T-cell (primary cell): ENCODE measurements at regions of chr4 and their contacts with region 1.

Region 1: DNA sequence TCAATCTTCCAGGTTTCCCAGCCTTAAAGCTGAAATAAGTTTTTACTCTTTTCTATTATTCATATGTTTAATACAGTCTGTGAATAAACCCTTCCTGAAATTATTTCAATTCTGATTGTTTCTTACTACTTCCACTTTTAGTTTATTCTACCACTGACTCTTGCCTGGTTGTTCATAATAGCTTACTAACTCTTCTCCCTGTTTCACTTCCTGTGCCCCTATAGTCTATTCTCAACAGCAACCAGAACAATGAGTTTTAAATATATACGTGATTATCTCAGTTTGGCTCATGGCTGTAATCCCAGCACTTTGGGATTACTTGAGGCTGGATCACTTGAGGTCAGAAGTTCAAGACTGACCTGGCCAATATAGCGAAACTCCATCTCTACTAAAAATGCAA is 408.0 kb upstream of the SPOCK3 start:
- DNase-seq: no peak
- ATAC-seq: no peak
- H3K4me3 ChIP-seq: no peak overlapping the region
- H3K4me3 Mint-ChIP-seq: no peak overlapping the region
- H3K27ac ChIP-seq: no peak overlapping the region
- H3K27ac Mint-ChIP-seq: no peak overlapping the region
- H3K4me1 ChIP-seq: no peaks in the 10 kb centered on the region
- H3K4me1 Mint-ChIP-seq: no peaks in the 10 kb centered on the region
- H3K27me3 ChIP-seq: no peaks in the 10 kb centered on the region
- H3K27me3 Mint-ChIP-seq: no peaks in the 10 kb centered on the region

Region 2: DNA sequence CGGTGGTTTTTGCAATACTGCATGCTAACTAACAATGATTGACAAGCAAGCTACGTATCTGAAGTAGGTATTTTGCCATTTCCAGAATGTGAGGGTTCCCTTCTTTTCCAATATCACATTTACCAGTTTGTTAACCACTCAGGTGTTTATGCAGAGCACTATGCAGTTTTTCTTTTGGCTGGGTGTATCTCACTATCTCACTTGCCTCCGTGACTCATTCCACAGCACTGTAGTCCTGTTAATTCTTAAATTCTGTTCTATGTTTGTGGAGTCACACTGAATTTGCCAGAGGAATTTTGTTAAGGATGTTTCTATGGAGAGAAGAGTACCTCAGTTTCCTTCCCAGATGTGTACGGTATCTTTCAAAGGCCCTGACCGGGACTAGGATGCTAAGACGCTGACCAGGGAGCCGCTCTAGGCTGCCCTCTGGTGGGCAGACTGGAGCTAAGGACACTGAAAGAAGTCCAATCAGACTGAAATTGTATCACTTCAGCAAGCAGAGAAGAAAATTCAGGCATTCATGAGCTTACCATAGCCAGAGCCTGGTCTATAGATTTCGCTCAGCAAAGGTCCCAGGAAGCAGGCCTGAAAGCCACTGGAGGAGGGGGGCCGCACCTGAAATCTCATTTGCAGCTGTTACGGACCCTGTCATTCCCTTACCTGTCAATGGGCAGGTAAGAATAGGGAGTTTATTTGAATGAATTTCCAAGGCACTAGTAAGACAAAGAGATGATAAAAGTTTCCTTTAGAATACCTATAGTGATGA is 19.6 kb before region 1 on chr4:
- CTCF ChIA-PET with region 1: no interaction called
- POLR2A ChIA-PET with region 1: no interaction called
- DNase-seq: peak in 1 of 35 experiments; percentile 4
- ATAC-seq: no peak
- H3K4me3 ChIP-seq: no peak overlapping the region
- H3K4me3 Mint-ChIP-seq: no peak overlapping the region
- H3K27ac ChIP-seq: no peak overlapping the region
- H3K27ac Mint-ChIP-seq: no peak overlapping the region
- H3K4me1 ChIP-seq: no peaks in the 10 kb centered on the region
- H3K4me1 Mint-ChIP-seq: no peaks in the 10 kb centered on the region
- H3K27me3 ChIP-seq: no peaks in the 10 kb centered on the region
- H3K27me3 Mint-ChIP-seq: no peaks in the 10 kb centered on the region

Region 3: DNA sequence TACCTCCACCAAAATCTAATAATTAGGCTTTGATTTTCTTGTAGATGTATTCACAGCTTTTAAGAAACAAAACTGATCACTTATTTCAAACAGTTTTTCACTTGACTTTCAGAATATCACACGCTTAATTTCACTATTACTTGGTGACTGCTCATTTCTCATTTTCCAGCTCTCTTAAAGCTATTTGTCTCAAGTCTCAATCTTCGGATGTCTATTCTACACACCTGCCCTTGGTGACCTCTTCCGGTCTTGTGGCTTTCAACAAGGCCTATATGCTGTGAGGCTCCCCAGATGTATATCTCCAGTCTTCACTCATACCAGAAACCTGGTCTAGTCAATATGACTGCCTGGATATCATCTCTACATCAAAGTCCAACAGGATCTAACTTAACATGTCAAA is 415.2 kb after region 1 on chr4:
- CTCF ChIA-PET with region 1: interaction called in 1 of 2 experiments, 11 read pairs
- POLR2A ChIA-PET with region 1: no interaction called
- DNase-seq: no peak
- ATAC-seq: no peak
- H3K4me3 ChIP-seq: no peak overlapping the region
- H3K4me3 Mint-ChIP-seq: no peak overlapping the region
- H3K27ac ChIP-seq: no peak overlapping the region
- H3K27ac Mint-ChIP-seq: no peak overlapping the region
- H3K4me1 ChIP-seq: no peaks in the 10 kb centered on the region
- H3K4me1 Mint-ChIP-seq: no peaks in the 10 kb centered on the region
- H3K27me3 ChIP-seq: no peaks in the 10 kb centered on the region
- H3K27me3 Mint-ChIP-seq: no peaks in the 10 kb centered on the region